CD4-positive, alpha-beta T cell (primary cell): ENCODE measurements at regions of chr20 and their contacts with region 1.

Region 1: GRCh38 chr20:36605399-36606157 is at the start of gene RAB5IF:
- DNase-seq: peak; percentile 97 to 100 (median 99)
- ATAC-seq: peak; percentile 89
- H3K4me3 ChIP-seq: peak within 1 kb of the TSS; percentile 100
- H3K4me3 Mint-ChIP-seq: peak within 1 kb of the TSS; percentile 98
- H3K27ac ChIP-seq: peak within 1 kb of the TSS; percentile 93 to 97
- H3K27ac Mint-ChIP-seq: peak within 1 kb of the TSS; percentile 97
- H3K4me1 ChIP-seq: peaks cover 37% of the 10 kb centered on the region
- H3K4me1 Mint-ChIP-seq: peaks cover 35% of the 10 kb centered on the region
- H3K27me3 ChIP-seq: no peaks in the 10 kb centered on the region
- H3K27me3 Mint-ChIP-seq: no peaks in the 10 kb centered on the region
- CTCF ChIP-seq: peak; percentile 95
- total RNA-seq, gene RAB5IF: 62.6 to 74.8 TPM

Region 2: DNA sequence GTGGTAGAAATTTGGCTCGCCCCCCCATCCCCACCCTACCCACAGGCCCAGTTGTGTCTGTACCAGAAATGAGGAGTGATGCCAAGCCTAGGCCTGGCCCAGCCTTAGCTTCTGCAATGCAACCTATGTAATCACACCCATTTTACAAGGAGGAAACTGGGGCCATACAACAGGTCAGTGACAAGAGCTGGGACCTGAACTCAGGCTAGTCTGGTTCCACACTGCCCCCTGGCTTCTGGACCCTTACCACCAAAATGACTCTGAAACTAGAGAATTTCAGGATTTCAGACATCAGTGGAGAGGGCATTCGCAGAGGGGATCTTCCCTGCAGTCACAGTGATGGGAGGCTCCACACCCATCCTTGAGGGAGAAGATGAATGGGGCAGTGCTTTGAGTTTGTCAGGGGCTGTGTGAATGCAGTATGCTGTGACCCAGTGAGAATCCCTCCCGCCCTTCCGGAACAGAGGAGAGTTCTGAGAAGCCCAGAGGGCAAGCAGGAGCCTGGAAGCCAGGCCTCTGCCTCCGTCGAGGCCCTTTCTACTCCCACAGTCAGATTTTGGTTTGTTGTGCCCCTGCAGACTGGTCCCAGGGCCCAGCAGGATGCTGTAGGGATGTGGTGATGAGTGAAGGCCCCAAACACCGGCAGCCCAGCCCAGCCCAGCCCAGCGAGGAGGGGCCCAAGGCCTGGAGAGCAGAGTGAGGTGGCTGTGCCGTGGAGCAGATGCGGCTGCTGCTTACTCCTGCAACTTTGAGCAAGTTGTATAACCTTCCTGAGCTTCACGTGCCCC is 112.4 kb before region 1 on chr20:
- CTCF ChIA-PET with region 1: no interaction called
- POLR2A ChIA-PET with region 1: interaction called, 10 read pairs
- intact Hi-C with region 1: no loop called
- DNase-seq: peak in 5 of 14 experiments; percentile 11 to 43 (median 32)
- ATAC-seq: no peak
- H3K4me3 ChIP-seq: no peak overlapping the region
- H3K4me3 Mint-ChIP-seq: no peak overlapping the region
- H3K27ac ChIP-seq: peak overlapping the region in 1 of 2 donors; percentile 88
- H3K27ac Mint-ChIP-seq: peak overlapping the region; percentile 88
- H3K4me1 ChIP-seq: peaks cover 46% of the 10 kb centered on the region
- H3K4me1 Mint-ChIP-seq: peaks cover 45% of the 10 kb centered on the region
- H3K27me3 ChIP-seq: no peaks in the 10 kb centered on the region
- H3K27me3 Mint-ChIP-seq: no peaks in the 10 kb centered on the region
- CTCF ChIP-seq: no peak

Region 3: DNA sequence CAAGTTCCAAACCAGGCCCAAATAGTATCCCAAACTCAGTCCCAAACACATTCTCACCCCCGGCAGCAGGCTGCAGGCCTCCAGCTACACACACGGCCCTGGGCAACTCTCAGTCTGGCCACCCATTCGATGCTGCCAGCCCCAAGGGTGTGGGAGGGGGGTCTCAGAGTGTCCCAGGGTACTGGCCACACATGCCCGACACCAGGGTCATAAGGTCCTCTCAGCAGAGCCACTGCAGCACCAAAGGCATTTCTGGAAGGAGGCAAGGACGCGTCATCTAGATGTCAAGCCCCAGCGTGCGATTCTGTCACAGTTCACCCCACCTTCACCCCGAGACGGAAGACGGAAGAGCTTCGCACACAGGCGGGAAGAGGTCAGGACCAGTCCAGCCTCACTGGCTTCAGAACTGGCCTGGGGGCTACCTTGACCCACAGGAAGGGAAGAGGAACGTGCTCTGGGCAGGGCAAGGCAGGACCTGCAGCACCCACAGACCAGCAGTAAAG is 54.7 kb before region 1 on chr20:
- CTCF ChIA-PET with region 1: interaction called, 3 read pairs
- POLR2A ChIA-PET with region 1: no interaction called
- intact Hi-C with region 1: loop called (anchors 1 kb)
- DNase-seq: no peak
- ATAC-seq: no peak
- H3K4me3 ChIP-seq: no peak overlapping the region
- H3K4me3 Mint-ChIP-seq: no peak overlapping the region
- H3K27ac ChIP-seq: no peak overlapping the region
- H3K27ac Mint-ChIP-seq: no peak overlapping the region
- H3K4me1 ChIP-seq: no peaks in the 10 kb centered on the region
- H3K4me1 Mint-ChIP-seq: no peaks in the 10 kb centered on the region
- H3K27me3 ChIP-seq: no peaks in the 10 kb centered on the region
- H3K27me3 Mint-ChIP-seq: no peaks in the 10 kb centered on the region
- CTCF ChIP-seq: no peak

Region 4: DNA sequence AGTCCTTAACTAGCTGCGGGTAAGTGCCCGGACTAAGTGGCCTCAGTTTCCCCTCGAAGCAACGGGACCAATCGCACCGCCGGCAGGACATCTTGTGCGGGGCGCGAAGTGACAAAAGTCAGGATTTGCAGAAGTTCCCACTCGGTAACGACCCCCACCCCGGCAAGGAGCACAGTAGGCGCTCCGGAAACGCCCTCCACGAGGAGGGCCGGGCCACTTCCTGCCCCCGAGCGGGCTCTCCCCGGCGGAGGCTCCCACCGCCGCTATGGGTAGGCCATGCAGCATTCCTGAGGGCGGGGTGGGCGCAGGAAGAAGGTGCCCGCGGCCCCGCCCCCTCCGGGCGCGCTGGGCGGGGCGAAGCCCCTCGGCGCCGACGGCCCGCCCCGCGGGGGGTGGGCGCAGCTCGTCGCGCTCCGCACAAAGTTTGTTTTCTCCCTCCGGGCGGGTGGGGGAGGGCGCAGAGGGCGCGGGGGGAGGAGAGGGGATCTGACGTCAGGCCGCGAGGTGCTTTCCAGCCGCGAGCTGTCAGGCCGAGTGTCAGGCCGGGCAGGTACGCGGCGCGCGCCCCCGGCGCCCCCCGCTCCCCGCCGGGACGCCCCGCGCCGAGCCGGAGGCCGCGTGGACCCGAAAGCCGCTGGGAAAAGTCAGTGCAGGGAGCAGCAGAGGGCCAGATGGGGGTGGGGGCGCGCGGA is 32.3 kb before region 1 on chr20 and contains the start of gene TGIF2:
- CTCF ChIA-PET with region 1: interaction called, 57 read pairs
- POLR2A ChIA-PET with region 1: interaction called, 121 read pairs
- intact Hi-C with region 1: loop called (anchors 1 kb)
- DNase-seq: peak; percentile 82 to 95 (median 88)
- ATAC-seq: peak; percentile 71
- H3K4me3 ChIP-seq: peak within 1 kb of the TSS; percentile 97
- H3K4me3 Mint-ChIP-seq: peak within 1 kb of the TSS; percentile 95
- H3K27ac ChIP-seq: peak within 1 kb of the TSS; percentile 100
- H3K27ac Mint-ChIP-seq: peak within 1 kb of the TSS; percentile 97
- H3K4me1 ChIP-seq: peaks cover 45% of the 10 kb centered on the region
- H3K4me1 Mint-ChIP-seq: peaks cover 40% of the 10 kb centered on the region
- H3K27me3 ChIP-seq: no peaks in the 10 kb centered on the region
- H3K27me3 Mint-ChIP-seq: no peaks in the 10 kb centered on the region
- CTCF ChIP-seq: no peak
- total RNA-seq, gene TGIF2: 29.2 to 34.5 TPM

Region 5: DNA sequence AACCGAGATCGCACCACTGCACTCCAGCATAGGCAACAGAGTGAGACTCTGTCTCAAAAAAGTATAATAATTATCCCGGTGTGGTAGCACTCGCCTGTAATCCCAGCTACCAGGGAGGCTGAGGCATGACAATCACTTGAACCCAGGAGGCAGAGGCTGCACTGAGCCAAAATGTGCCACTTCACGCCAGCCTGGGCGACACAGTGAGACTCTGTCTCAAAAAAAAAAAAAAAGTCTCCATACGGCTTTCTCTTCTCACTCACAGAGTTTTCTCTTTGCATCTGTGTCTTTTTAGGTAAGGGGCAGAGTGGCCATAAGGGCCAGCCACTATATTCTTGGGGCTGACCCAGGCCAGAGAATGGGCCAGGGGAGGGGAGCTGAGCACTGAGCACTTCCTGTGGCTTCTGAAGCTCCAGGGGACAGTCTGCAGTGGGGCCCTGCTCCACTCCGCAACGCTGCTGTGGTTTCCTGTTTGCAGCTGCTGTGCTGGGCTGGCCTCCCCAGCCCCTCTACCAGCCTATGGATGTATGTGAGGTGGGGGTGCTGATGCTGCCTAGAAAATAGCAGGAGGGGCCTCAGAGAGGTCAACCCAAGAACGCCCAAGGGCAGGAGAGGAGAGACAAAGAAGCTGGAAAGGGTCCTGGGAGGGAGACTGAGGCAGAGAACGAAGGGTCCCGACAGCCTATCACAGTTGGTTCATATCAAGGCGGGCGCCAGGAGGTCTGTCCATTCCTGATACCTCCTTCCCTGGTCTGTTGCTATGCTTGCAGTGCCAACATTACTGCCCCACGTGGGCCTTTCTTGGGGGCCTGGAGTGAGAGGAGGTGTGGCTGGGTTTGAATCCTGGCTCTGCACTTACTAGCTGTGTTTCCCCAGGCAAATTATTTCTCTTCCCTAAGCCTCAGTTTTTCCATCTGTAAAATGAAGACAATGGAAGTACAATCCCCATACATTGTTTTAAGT is 24.4 kb after region 1 on chr20:
- CTCF ChIA-PET with region 1: interaction called, 8 read pairs
- POLR2A ChIA-PET with region 1: interaction called, 14 read pairs
- intact Hi-C with region 1: no loop called
- DNase-seq: peak in 13 of 14 experiments; percentile 16 to 71 (median 46)
- ATAC-seq: peak; percentile 85
- H3K4me3 ChIP-seq: peak overlapping the region; percentile 20
- H3K4me3 Mint-ChIP-seq: peak overlapping the region; percentile 82
- H3K27ac ChIP-seq: peak overlapping the region; percentile 57 to 65
- H3K27ac Mint-ChIP-seq: peak overlapping the region; percentile 88
- H3K4me1 ChIP-seq: peaks cover 44% of the 10 kb centered on the region
- H3K4me1 Mint-ChIP-seq: peaks cover 59% of the 10 kb centered on the region
- H3K27me3 ChIP-seq: no peaks in the 10 kb centered on the region
- H3K27me3 Mint-ChIP-seq: no peaks in the 10 kb centered on the region
- CTCF ChIP-seq: no peak

Region 6: GRCh38 chr20:36736451-36737182 is 131.0 kb after region 1 on chr20:
- CTCF ChIA-PET with region 1: no interaction called
- POLR2A ChIA-PET with region 1: interaction called, 12 read pairs
- intact Hi-C with region 1: no loop called
- DNase-seq: no peak
- ATAC-seq: no peak
- H3K4me3 ChIP-seq: no peak overlapping the region
- H3K4me3 Mint-ChIP-seq: no peak overlapping the region
- H3K27ac ChIP-seq: no peak overlapping the region
- H3K27ac Mint-ChIP-seq: no peak overlapping the region
- H3K4me1 ChIP-seq: peaks cover 28% of the 10 kb centered on the region
- H3K4me1 Mint-ChIP-seq: peaks cover 38% of the 10 kb centered on the region
- H3K27me3 ChIP-seq: no peaks in the 10 kb centered on the region
- H3K27me3 Mint-ChIP-seq: no peaks in the 10 kb centered on the region
- CTCF ChIP-seq: no peak

Region 7: GRCh38 chr20:36773597-36774390 is 168.2 kb after region 1 on chr20 and contains the start of gene DSN1:
- CTCF ChIA-PET with region 1: interaction called, 7 read pairs
- POLR2A ChIA-PET with region 1: interaction called, 16 read pairs
- intact Hi-C with region 1: loop called (anchors 5 kb)
- DNase-seq: peak; percentile 95 to 99 (median 98)
- ATAC-seq: peak; percentile 78
- H3K4me3 ChIP-seq: peak within 1 kb of the TSS; percentile 86
- H3K4me3 Mint-ChIP-seq: peak within 1 kb of the TSS; percentile 97
- H3K27ac ChIP-seq: peak within 1 kb of the TSS; percentile 83 to 91
- H3K27ac Mint-ChIP-seq: peak within 1 kb of the TSS; percentile 94
- H3K4me1 ChIP-seq: peaks cover 21% of the 10 kb centered on the region
- H3K4me1 Mint-ChIP-seq: peaks cover 21% of the 10 kb centered on the region
- H3K27me3 ChIP-seq: no peaks in the 10 kb centered on the region
- H3K27me3 Mint-ChIP-seq: no peaks in the 10 kb centered on the region
- CTCF ChIP-seq: no peak
- total RNA-seq, gene DSN1: 10.5 to 14.3 TPM

Region 8: GRCh38 chr20:36784900-36785299 is 179.3 kb after region 1 on chr20:
- CTCF ChIA-PET with region 1: no interaction called
- POLR2A ChIA-PET with region 1: no interaction called
- intact Hi-C with region 1: no loop called
- DNase-seq: no peak
- ATAC-seq: no peak
- H3K4me3 ChIP-seq: no peak overlapping the region
- H3K4me3 Mint-ChIP-seq: no peak overlapping the region
- H3K27ac ChIP-seq: no peak overlapping the region
- H3K27ac Mint-ChIP-seq: no peak overlapping the region
- H3K4me1 ChIP-seq: no peaks in the 10 kb centered on the region
- H3K4me1 Mint-ChIP-seq: no peaks in the 10 kb centered on the region
- H3K27me3 ChIP-seq: no peaks in the 10 kb centered on the region
- H3K27me3 Mint-ChIP-seq: no peaks in the 10 kb centered on the region
- CTCF ChIP-seq: no peak